ENCODE measurements at regions of chr19 and their contacts with region 1.

Region 1: GRCh38 chr19:42207767-42208271 is 9.7 kb downstream of the DEDD2 start:
- DNase-seq: peak; percentile 49
- H3K4me3 ChIP-seq: no peak overlapping the region
- H3K27ac ChIP-seq: peak overlapping the region; percentile 77
- H3K27me3 ChIP-seq: no peaks in the 10 kb centered on the region
- CTCF ChIP-seq: no peak

Region 2: DNA sequence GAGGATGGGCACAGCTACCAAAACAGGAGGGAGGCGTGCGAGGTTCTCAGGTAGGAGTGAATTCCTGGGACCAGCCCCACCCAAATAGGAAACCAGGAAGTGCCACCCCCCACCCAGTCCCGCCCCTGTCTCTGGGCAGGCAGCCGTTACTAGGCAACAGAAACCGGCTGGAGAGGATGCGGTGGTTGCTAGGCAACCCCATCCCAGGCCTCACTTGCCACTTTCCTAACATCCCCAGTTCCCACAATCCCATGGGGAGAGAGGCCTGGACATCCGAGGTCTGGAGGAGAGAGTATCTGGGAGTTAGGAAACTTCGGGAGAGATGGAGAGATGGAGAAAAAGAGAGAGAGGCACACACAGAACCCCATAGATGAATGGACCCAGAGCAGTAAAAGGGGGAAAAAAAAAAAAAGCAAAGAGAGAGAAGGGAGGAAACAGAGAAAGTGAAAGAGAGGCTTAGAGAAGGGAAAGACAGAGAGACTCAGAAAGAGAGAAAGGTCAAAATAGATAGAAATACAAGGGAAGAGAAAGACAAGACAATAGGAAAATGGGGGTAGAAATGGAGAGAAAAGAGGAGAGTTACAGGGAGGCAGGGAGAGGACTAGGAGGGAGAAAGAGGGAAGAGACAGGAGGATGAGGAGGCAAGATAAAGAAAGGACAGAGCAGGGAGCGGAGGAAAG is 141.6 kb before region 1 on chr19:
- CTCF ChIA-PET with region 1: no interaction called
- POLR2A ChIA-PET with region 1: no interaction called
- DNase-seq: no peak
- H3K4me3 ChIP-seq: no peak overlapping the region
- H3K27ac ChIP-seq: no peak overlapping the region
- H3K27me3 ChIP-seq: peaks cover 64% of the 10 kb centered on the region
- CTCF ChIP-seq: no peak

Region 3: GRCh38 chr19:42132851-42133528 is 74.8 kb before region 1 on chr19:
- CTCF ChIA-PET with region 1: no interaction called
- POLR2A ChIA-PET with region 1: no interaction called
- DNase-seq: no peak
- H3K4me3 ChIP-seq: peak overlapping the region; percentile 60
- H3K27ac ChIP-seq: no peak overlapping the region
- H3K27me3 ChIP-seq: peaks cover 9% of the 10 kb centered on the region
- CTCF ChIP-seq: peak; percentile 85

Region 4: GRCh38 chr19:42268704-42269477 is 61.1 kb after region 1 on chr19 and contains the start of gene CIC:
- CTCF ChIA-PET with region 1: no interaction called
- POLR2A ChIA-PET with region 1: interaction called, 13 read pairs
- DNase-seq: peak; percentile 100
- H3K4me3 ChIP-seq: peak within 1 kb of the TSS; percentile 94
- H3K27ac ChIP-seq: peak within 1 kb of the TSS; percentile 98
- H3K27me3 ChIP-seq: no peaks in the 10 kb centered on the region
- CTCF ChIP-seq: no peak
- polyA plus RNA-seq, gene CIC: 2.9 and 4.2 TPM in 2 replicates